ENCODE measurements at regions of chr10 and their contacts with region 1.

Region 1: DNA sequence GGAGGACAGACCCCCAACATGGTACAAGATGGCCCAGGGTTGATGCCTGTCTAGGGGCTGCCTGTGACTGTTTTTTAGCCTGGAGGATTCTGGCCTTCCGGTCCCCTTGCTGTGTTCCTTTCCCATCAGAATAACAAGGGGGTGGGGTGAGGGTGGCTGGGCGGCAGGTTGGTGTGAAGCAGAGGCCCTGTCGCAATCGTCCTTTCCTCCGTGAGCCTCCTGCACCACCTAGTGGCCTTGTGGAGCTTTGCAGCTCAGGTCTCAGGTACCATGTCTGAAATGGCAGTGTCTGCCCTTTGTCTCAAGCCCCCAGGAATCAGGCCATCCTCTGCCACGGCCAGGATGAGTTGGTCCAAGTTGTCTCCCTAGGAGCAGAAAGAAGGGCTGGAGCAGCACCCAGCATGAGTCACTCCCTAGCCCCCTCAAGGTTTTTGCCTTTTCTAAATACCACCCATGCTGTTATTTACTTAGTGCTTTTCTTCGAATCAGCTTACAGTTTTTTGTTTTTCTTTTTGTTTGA is 24.2 kb downstream of the TACR2 start:
- ATAC-seq: peak; percentile 61 to 96 (median 90)
- H3K4me3 ChIP-seq: no peak overlapping the region
- H3K27ac ChIP-seq: peak overlapping the region in 1 of 2 donors; percentile 0
- H3K4me1 ChIP-seq: peaks cover 13 to 18% of the 10 kb centered on the region in 2 donors

Region 2: GRCh38 chr10:69222157-69223027 is 170.1 kb before region 1 on chr10:
- in situ Hi-C with region 1: loop called in 2 of 9 experiments (anchors 10 to 25 kb)
- ATAC-seq: peak in 7 of 8 experiments; percentile 38 to 91 (median 46)
- H3K4me3 ChIP-seq: no peak overlapping the region
- H3K27ac ChIP-seq: no peak overlapping the region
- H3K4me1 ChIP-seq: peaks cover 4 to 11% of the 10 kb centered on the region in 2 donors

Region 3: GRCh38 chr10:69237528-69238159 is 154.9 kb before region 1 on chr10:
- in situ Hi-C with region 1: loop called in 7 of 9 experiments (anchors 5 to 25 kb)
- ATAC-seq: peak; percentile 87 to 100 (median 100)
- H3K4me3 ChIP-seq: no peak overlapping the region
- H3K27ac ChIP-seq: no peak overlapping the region
- H3K4me1 ChIP-seq: peaks cover 2 to 7% of the 10 kb centered on the region in 2 donors

Region 4: DNA sequence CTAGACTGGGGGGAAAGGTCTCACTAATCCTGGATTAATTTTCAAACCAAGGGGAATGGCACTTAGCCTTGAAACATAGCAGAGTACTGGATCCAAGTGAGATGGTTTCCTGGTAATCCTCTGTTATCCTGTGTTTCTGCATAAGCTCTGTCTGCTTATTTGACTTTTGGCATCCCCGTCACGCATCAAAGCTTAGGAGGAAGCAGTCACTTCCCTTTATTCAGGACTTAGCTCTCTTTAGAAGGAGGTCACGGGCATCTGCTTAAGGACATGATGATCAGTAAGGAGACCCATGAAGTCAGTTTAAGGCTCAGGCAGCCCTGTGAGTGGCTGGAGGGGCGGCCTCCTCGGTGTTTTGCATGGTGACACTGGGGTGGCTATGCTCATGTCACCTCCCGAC is 88.8 kb after region 1 on chr10:
- in situ Hi-C with region 1: no loop called
- ATAC-seq: no peak
- H3K4me3 ChIP-seq: no peak overlapping the region
- H3K27ac ChIP-seq: no peak overlapping the region
- H3K4me1 ChIP-seq: peaks cover 8 to 10% of the 10 kb centered on the region in 2 donors

Measured in motor neuron (in vitro differentiated cells).